ENCODE measurements at regions of chr15 and their contacts with region 1.

Region 1: DNA sequence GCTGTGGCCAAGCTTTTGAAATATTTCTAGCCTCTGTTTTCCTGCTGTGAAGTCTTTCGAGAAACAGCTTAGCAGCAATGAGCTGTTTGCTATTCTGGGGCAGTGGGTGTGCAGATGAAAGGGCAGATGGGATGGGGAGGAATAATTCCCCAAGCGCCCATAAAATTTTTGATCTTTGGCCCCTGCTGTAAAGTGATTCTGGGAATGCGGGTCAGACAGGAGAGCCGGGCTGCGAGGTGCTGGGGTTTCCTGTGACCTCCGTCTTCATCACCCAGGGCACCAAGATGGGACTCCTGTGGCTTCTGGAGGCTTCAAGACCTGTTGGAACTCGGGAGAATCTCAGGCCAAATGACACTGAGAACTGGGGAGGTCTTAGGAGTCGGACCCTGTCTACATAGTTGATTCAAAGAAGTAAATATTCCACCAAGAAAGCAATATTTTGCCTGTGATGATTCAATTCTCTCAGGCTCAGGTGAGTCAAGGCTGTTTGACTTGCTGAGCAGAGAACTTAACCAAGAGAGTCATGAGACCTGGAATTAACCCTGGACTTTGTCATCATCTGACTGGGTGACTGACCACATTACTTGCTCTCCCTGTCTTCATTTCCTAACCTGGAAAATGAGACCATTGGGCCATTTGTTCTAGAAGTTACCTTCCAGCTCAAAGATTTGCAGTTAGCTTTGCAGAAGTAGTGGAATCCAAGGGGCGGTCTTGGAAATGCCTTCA is 86.4 kb downstream of the POLR2M start:
- DNase-seq: peak; percentile 80
- H3K4me3 ChIP-seq: no peak overlapping the region
- H3K27ac ChIP-seq: no peak overlapping the region
- H3K4me1 ChIP-seq: no peaks in the 10 kb centered on the region
- H3K27me3 ChIP-seq: no peaks in the 10 kb centered on the region
- CTCF ChIP-seq: no peak

Region 2: DNA sequence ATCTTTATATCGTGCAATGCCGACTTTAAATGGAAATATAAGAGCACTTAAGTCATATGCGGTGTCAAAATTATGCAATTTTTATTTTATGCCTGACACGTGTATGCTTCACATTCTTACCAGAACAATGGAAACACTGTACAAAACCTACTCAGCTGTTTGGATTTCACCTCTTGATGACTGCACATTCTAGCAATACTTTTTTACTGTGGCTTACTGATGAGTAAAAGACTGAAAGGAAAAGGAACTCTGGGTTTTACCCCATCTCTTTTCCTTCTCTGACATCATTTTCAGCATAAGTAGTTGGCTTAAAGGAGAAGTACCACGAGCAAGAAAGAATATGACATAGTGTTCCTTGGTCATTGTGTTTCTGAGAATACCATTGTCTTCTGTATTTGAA is 56.4 kb after region 1 on chr15:
- CTCF ChIA-PET with region 1: no interaction called
- dilution Hi-C with region 1: loop called (anchors 5 kb)
- in situ Hi-C with region 1: no loop called
- intact Hi-C with region 1: no loop called
- DNase-seq: peak; percentile 94
- H3K4me3 ChIP-seq: no peak overlapping the region
- H3K27ac ChIP-seq: no peak overlapping the region
- H3K4me1 ChIP-seq: peaks cover 4% of the 10 kb centered on the region
- H3K27me3 ChIP-seq: no peaks in the 10 kb centered on the region
- CTCF ChIP-seq: no peak